Dorsolateral prefrontal cortex (tissue), 120 donors: ENCODE measurements at regions of chr17 and their contacts with region 1.

Region 1: DNA sequence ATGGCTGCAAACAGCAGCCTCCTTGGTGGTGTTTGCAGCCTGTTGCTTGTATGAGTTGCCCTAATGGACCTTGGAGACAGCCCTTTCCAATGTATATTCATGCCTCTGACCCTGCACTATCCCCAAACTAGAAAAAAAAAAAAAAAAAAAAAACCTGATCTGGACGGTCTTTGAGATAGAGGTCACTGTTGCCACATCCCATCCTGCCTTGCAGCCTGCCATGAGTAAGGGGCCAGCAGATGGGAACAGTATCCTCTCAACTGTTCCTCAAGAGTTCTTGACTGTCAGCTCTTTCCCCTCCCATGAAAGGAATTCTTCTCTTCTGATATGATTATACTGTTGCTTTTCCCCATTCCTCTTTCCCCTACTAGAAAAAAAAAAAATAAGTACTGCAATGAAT is 152.4 kb downstream of the SSH2 start:
- DNase-seq: no peak
- H3K4me3 ChIP-seq: no peak overlapping the region
- H3K27ac ChIP-seq: peak overlapping the region in 5 of 59 donors; percentile 13 to 53 (median 24)
- H3K27me3 ChIP-seq: no peaks in the 10 kb centered on the region
- CTCF ChIP-seq: no peak

Region 2: GRCh38 chr17:29709861-29710519 is 67.7 kb before region 1 on chr17:
- intact Hi-C with region 1: loop called in 1 of 2 experiments (anchors 5 kb)
- DNase-seq: no peak
- H3K4me3 ChIP-seq: no peak overlapping the region
- H3K27ac ChIP-seq: peak overlapping the region in 51 of 59 donors; percentile 1 to 76 (median 54)
- H3K27me3 ChIP-seq: no peaks in the 10 kb centered on the region
- CTCF ChIP-seq: no peak